ENCODE measurements at regions of chr14 and their contacts with region 1.

Region 1: DNA sequence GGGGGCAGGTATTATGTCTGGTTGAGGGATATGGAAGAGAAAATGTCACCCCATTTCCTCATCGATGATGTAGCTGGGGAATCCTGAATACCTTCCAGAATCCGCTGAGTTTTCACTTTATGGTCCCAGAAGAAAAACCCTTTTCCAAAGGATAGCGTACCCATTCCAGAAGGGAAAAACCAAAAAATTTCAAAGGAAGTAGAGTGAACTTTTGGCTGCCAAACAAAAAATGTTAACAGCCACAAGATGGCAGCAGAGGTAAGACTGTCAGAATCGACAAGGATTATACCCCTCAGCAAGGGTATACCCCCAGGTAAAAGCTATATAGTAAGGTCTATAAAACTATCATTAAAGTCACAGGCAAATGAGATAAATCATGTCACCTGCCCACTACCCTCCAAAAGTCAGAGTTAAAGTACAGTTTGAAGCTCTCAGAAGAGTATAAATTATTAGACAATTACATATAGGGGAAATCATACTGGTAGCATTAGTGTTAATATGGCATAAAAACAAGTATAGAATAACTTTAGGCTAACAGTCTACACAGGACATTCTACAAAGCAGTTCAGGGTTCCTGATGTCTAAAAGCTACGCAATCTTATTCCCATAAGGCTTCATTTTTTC is 18.0 kb downstream of the ACIN1 start:
- DNase-seq: peak; percentile 48
- H3K4me3 Mint-ChIP-seq: no peak overlapping the region
- H3K27ac Mint-ChIP-seq: no peak overlapping the region
- H3K4me1 Mint-ChIP-seq: peaks cover 30% of the 10 kb centered on the region
- H3K27me3 Mint-ChIP-seq: no peaks in the 10 kb centered on the region
- CTCF ChIP-seq: peak; percentile 55

Region 2: DNA sequence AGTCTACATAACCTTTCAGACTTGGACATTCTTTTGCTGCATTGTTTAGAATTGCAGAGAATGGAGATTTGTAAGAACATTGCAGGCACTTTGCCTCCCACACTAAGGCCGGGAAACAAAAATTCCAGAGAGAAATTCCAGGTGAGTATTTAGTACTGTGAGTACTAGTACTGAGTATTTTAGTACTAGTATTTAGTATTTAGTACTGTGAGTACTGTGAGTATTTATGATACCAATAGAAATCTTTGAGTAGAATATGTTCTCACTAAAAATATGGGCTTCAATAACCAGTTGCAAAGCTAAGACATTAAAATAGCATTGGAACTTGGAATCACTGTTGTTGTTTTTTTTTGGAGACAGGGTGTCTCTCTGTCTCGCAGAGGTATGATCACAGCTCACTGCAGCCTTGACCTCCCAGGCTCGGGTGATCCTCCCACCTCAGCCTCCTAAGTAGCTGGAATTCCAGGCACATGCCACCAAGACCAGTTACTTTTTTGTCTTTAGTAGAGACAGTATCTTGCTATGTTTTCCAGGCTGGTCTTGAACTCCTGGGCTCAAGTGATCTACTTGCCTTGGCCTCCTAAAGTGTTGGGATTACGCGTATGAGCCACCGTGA is 114.7 kb before region 1 on chr14:
- CTCF ChIA-PET with region 1: no interaction called
- POLR2A ChIA-PET with region 1: no interaction called
- intact Hi-C with region 1: no loop called
- DNase-seq: no peak
- H3K4me3 Mint-ChIP-seq: no peak overlapping the region
- H3K27ac Mint-ChIP-seq: no peak overlapping the region
- H3K4me1 Mint-ChIP-seq: no peaks in the 10 kb centered on the region
- H3K27me3 Mint-ChIP-seq: no peaks in the 10 kb centered on the region
- CTCF ChIP-seq: no peak

Region 3: DNA sequence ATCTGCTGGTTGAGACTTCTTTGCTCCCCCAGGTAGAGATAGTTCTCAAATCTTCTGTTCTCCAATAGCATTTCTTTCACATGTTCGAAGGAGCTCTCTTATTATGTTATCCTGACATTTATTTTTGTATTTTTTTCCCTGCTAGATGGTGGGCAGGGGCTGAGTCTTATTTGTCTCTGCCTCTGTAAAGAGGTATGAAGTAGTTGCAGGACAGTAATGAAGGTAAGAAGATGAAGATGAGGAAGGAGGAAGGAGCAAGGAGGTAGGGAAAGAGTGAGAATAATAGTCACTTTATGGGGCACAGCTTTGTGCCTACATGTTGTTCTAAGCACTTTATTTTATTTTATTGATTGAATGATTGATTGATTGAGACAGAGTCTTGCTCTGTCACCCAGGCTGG is 32.9 kb after region 1 on chr14:
- CTCF ChIA-PET with region 1: interaction called, 44 read pairs
- POLR2A ChIA-PET with region 1: interaction called, 4 read pairs
- intact Hi-C with region 1: loop called (anchors 2 kb)
- DNase-seq: no peak
- H3K4me3 Mint-ChIP-seq: no peak overlapping the region
- H3K27ac Mint-ChIP-seq: no peak overlapping the region
- H3K4me1 Mint-ChIP-seq: peaks cover 5% of the 10 kb centered on the region
- H3K27me3 Mint-ChIP-seq: no peaks in the 10 kb centered on the region
- CTCF ChIP-seq: no peak

Region 4: GRCh38 chr14:23114669-23115491 is 38.0 kb after region 1 on chr14:
- CTCF ChIA-PET with region 1: interaction called, 44 read pairs
- POLR2A ChIA-PET with region 1: no interaction called
- intact Hi-C with region 1: no loop called
- DNase-seq: peak; percentile 87
- H3K4me3 Mint-ChIP-seq: no peak overlapping the region
- H3K27ac Mint-ChIP-seq: peak overlapping the region; percentile 77
- H3K4me1 Mint-ChIP-seq: peaks cover 16% of the 10 kb centered on the region
- H3K27me3 Mint-ChIP-seq: no peaks in the 10 kb centered on the region
- CTCF ChIP-seq: no peak